ENCODE measurements at regions of chr11 and their contacts with region 1.

Region 1: GRCh38 chr11:60615497-60615896 is 83.9 kb upstream of the MS4A8 start:
- DNase-seq: no peak
- H3K4me3 Mint-ChIP-seq: no peak overlapping the region
- H3K27ac Mint-ChIP-seq: no peak overlapping the region
- H3K4me1 Mint-ChIP-seq: no peaks in the 10 kb centered on the region
- H3K27me3 Mint-ChIP-seq: peaks cover 18% of the 10 kb centered on the region

Region 2: GRCh38 chr11:60345489-60345888 is 270.0 kb before region 1 on chr11:
- CTCF ChIA-PET with region 1: interaction called, 10 read pairs
- intact Hi-C with region 1: loop called (anchors 1 kb)
- DNase-seq: peak; percentile 41
- H3K4me3 Mint-ChIP-seq: no peak overlapping the region
- H3K27ac Mint-ChIP-seq: no peak overlapping the region
- H3K4me1 Mint-ChIP-seq: no peaks in the 10 kb centered on the region
- H3K27me3 Mint-ChIP-seq: peaks cover 21% of the 10 kb centered on the region

Region 3: GRCh38 chr11:60455531-60456042 is 159.9 kb before region 1 on chr11 and contains the start of gene MS4A1:
- CTCF ChIA-PET with region 1: no interaction called
- intact Hi-C with region 1: no loop called
- DNase-seq: no peak
- H3K4me3 Mint-ChIP-seq: no peak within 1 kb of the TSS
- H3K27ac Mint-ChIP-seq: no peak within 1 kb of the TSS
- H3K4me1 Mint-ChIP-seq: no peaks in the 10 kb centered on the region
- H3K27me3 Mint-ChIP-seq: peaks cover 2% of the 10 kb centered on the region
- total RNA-seq, gene MS4A1: 0.35 to 0.36 TPM

Region 4: GRCh38 chr11:60485986-60486385 is 129.5 kb before region 1 on chr11:
- CTCF ChIA-PET with region 1: interaction called, 3 read pairs
- intact Hi-C with region 1: loop called (anchors 2 kb)
- DNase-seq: peak; percentile 38
- H3K4me3 Mint-ChIP-seq: no peak overlapping the region
- H3K27ac Mint-ChIP-seq: no peak overlapping the region
- H3K4me1 Mint-ChIP-seq: peaks cover 4% of the 10 kb centered on the region
- H3K27me3 Mint-ChIP-seq: no peaks in the 10 kb centered on the region

Region 5: GRCh38 chr11:60544076-60544475 is 71.4 kb before region 1 on chr11:
- CTCF ChIA-PET with region 1: no interaction called
- intact Hi-C with region 1: no loop called
- DNase-seq: no peak
- H3K4me3 Mint-ChIP-seq: no peak overlapping the region
- H3K27ac Mint-ChIP-seq: no peak overlapping the region
- H3K4me1 Mint-ChIP-seq: no peaks in the 10 kb centered on the region
- H3K27me3 Mint-ChIP-seq: peaks cover 25% of the 10 kb centered on the region

Region 6: DNA sequence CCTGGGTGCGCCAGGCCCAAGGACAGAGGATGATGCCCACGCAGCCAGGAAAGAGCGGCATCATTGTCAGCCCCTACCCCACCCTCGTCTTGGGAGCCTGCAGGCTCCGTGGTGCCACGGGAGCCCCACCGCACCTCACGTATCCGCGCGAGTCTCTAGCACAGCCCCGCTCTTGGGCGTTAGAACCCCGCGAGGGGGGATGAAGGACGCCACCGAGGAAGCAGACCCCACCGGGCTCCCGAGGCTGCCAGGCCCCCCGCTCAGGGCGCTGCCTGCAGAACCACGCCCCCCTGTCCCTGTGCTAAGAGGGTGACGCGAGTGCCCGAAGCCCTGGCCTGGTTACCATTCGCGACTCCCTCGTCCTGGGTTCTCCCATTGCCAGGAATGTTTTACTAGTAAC is 31.6 kb after region 1 on chr11:
- CTCF ChIA-PET with region 1: no interaction called
- intact Hi-C with region 1: no loop called
- DNase-seq: no peak
- H3K4me3 Mint-ChIP-seq: no peak overlapping the region
- H3K27ac Mint-ChIP-seq: no peak overlapping the region
- H3K4me1 Mint-ChIP-seq: no peaks in the 10 kb centered on the region
- H3K27me3 Mint-ChIP-seq: peaks cover 5% of the 10 kb centered on the region

Region 7: GRCh38 chr11:60994541-60995080 is 379.1 kb after region 1 on chr11:
- CTCF ChIA-PET with region 1: no interaction called
- intact Hi-C with region 1: no loop called
- DNase-seq: peak; percentile 74
- H3K4me3 Mint-ChIP-seq: peak overlapping the region; percentile 74
- H3K27ac Mint-ChIP-seq: peak overlapping the region; percentile 98
- H3K4me1 Mint-ChIP-seq: peaks cover 80% of the 10 kb centered on the region
- H3K27me3 Mint-ChIP-seq: no peaks in the 10 kb centered on the region